GM10248 (cell line): ENCODE measurements at regions of chr2 and their contacts with region 1.

Region 1: GRCh38 chr2:3214827-3215404 is 162.7 kb downstream of the EIPR1 start:
- DNase-seq: no peak
- CTCF ChIP-seq: no peak

Region 2: GRCh38 chr2:2950403-2950952 is 264.4 kb before region 1 on chr2:
- CTCF ChIA-PET with region 1: no interaction called
- POLR2A ChIA-PET with region 1: no interaction called
- DNase-seq: no peak
- CTCF ChIP-seq: no peak

Region 3: DNA sequence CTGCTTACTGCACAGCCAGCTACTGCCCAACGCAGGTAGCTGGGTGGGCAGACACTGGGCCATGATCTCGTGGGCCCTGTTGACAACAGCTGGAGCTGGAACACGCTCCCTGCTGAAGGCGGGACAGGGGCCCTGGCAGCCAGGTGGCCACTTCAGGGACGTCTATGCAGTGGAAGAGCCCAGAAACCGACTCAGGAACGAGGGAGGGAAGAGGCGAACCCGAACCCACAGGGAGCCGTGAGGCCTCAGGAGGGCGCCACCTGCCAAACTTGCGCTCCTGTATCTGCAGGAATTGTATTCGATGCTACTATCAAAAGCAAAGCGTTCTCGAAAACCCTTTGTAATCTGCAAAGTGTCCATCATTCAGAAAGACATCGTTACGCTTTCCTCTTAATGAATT is 35.7 kb before region 1 on chr2:
- CTCF ChIA-PET with region 1: no interaction called
- POLR2A ChIA-PET with region 1: no interaction called
- DNase-seq: no peak
- CTCF ChIP-seq: peak; percentile 15

Region 4: GRCh38 chr2:3204031-3204821 is 10.7 kb before region 1 on chr2:
- CTCF ChIA-PET with region 1: interaction called, 28 read pairs
- POLR2A ChIA-PET with region 1: no interaction called
- DNase-seq: no peak
- CTCF ChIP-seq: no peak

Region 5: DNA sequence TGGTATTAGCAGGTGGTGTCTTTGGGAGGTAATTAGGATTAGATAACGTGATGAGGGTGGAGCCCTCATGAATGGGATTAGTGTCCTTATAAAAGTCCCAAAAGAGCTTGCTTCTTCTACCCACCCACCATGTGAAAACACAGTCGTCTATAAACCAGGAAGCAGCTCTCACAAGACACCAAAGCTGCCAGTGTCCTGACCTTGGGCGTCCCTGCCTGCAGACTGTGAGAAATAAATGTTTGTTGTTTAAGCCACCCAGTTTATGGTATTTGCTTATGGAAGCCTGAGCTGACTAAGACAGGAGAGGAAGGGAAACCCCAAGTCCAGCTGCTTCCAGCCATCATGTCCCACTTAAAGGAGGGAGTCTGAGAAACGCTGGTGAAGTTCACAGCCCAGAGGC is 290.9 kb after region 1 on chr2:
- CTCF ChIA-PET with region 1: no interaction called
- POLR2A ChIA-PET with region 1: no interaction called
- DNase-seq: no peak
- CTCF ChIP-seq: no peak